H1 (cell line): ENCODE measurements at regions of chr6 and their contacts with region 1.

Region 1: DNA sequence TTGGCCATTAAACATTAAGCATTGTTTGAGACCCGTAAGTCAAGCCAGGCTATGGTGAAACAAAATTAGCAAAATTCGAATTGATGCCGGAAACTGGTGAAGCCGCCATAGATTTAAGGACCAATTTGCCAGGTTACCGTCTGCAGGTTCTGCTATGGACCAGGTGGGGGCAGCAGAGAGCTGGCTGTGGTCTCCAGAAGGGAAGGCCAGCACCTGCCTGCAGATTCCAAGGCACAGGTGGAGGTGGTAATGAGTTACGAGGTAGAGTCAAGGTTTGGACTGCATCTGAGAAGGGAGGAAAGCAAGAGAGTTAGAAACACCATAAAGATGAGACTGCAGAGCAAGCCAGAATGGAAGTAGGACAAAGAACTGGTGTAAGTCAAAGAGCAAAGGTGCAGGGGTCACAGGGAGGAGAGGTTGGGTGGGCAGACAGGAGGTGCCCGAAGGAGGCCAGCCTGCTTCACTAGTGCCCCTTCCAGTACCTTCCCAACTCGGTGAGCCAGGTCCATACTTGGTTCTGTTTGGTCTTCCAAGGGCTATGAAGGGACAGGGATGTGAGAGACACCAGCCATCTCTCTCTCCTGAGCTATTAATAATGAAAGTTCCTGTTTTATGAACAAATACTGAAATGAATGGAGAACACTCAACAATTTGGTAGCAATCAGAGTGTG is 131.6 kb upstream of the ESR1 start:
- DNase-seq: peak; percentile 47 to 77
- H3K4me3 ChIP-seq: no peak overlapping the region
- H3K27ac ChIP-seq: no peak overlapping the region
- H3K4me1 ChIP-seq: no peaks in the 10 kb centered on the region
- H3K27me3 ChIP-seq: no peaks in the 10 kb centered on the region
- CTCF ChIP-seq: peak; percentile 95 to 97 (median 96)
- EP300 ChIP-seq: no peak
- POLR2A ChIP-seq: no peak
- RAD21 ChIP-seq: peak; percentile 98 to 99

Region 2: GRCh38 chr6:151067684-151068596 is 607.9 kb before region 1 on chr6:
- CTCF ChIA-PET with region 1: no interaction called
- POLR2A ChIA-PET with region 1: no interaction called
- DNase-seq: peak in 1 of 2 experiments; percentile 33
- H3K4me3 ChIP-seq: no peak overlapping the region
- H3K27ac ChIP-seq: no peak overlapping the region
- H3K4me1 ChIP-seq: no peaks in the 10 kb centered on the region
- H3K27me3 ChIP-seq: no peaks in the 10 kb centered on the region
- CTCF ChIP-seq: no peak
- EP300 ChIP-seq: no peak
- POLR2A ChIP-seq: no peak
- RAD21 ChIP-seq: no peak

Region 3: DNA sequence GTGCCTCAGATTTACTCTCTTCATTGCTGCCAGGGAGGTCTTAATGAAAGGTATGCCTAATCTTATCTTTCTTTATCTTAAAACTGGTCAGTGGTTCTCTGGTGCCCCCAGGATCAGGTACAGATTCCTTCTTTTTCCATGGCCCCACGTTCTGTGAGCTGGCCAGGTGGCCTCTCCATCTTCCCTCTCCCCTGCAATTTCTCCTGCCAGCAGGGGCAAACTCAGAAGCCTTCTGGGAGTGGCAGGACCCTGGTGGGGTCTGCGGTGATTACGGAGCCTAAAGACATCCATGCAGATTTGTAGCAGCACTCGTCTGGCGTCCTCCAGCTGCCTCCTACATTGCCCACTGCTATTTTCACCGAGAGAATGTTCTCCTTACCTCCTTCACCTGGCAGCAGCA is 86.2 kb before region 1 on chr6:
- CTCF ChIA-PET with region 1: no interaction called
- POLR2A ChIA-PET with region 1: no interaction called
- DNase-seq: no peak
- H3K4me3 ChIP-seq: no peak overlapping the region
- H3K27ac ChIP-seq: no peak overlapping the region
- H3K4me1 ChIP-seq: peaks cover 0 to 3% (median 1%) of the 10 kb centered on the region in 4 experiments; a peak in 2 of 7 replicates
- H3K27me3 ChIP-seq: no peaks in the 10 kb centered on the region
- CTCF ChIP-seq: no peak
- EP300 ChIP-seq: no peak
- POLR2A ChIP-seq: no peak
- RAD21 ChIP-seq: no peak

Region 4: DNA sequence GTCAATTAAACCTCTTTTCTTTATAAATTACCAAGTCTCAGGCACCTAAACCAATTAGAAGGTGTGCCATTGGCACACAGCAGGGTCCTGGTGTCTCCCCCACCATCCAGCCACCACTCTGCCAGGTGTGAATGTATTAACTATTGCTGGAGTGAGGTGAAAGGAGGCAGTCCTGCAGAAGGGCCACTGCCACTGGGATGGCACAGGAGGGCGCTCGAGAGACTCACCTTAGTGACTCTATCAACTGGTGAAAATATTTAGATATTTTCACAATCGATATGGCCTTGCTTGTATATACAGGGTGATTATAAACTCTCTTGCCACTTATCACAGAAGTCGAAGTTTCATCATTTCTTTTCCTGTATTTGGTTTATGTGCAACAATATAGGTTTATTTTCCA is 14.0 kb before region 1 on chr6:
- CTCF ChIA-PET with region 1: interaction called, 18 read pairs
- POLR2A ChIA-PET with region 1: no interaction called
- DNase-seq: peak in 1 of 2 experiments; percentile 70
- H3K4me3 ChIP-seq: no peak overlapping the region
- H3K27ac ChIP-seq: no peak overlapping the region
- H3K4me1 ChIP-seq: no peaks in the 10 kb centered on the region
- H3K27me3 ChIP-seq: no peaks in the 10 kb centered on the region
- CTCF ChIP-seq: peak; percentile 70 to 76 (median 72)
- EP300 ChIP-seq: no peak
- POLR2A ChIP-seq: no peak
- RAD21 ChIP-seq: peak; percentile 59 to 70

Region 5: GRCh38 chr6:151690768-151691562 is 15.1 kb after region 1 on chr6:
- CTCF ChIA-PET with region 1: interaction called, 14 read pairs
- POLR2A ChIA-PET with region 1: no interaction called
- DNase-seq: no peak
- H3K4me3 ChIP-seq: no peak overlapping the region
- H3K27ac ChIP-seq: no peak overlapping the region
- H3K4me1 ChIP-seq: peaks cover 0 to 3% (median under 1%) of the 10 kb centered on the region in 4 experiments; a peak in 3 of 7 replicates
- H3K27me3 ChIP-seq: no peaks in the 10 kb centered on the region
- CTCF ChIP-seq: no peak
- EP300 ChIP-seq: no peak
- POLR2A ChIP-seq: no peak
- RAD21 ChIP-seq: no peak